OCI-LY7 (cell line): ENCODE measurements at regions of chr3 and their contacts with region 1.

Region 1: GRCh38 chr3:37779289-37780152 is 82.2 kb upstream of the CTDSPL start:
- DNase-seq: peak; percentile 72
- H3K4me3 ChIP-seq: no peak overlapping the region
- H3K27ac ChIP-seq: no peak overlapping the region
- H3K4me1 ChIP-seq: no peaks in the 10 kb centered on the region
- CTCF ChIP-seq: peak; percentile 90

Region 2: GRCh38 chr3:37319784-37320183 is 459.7 kb before region 1 on chr3:
- CTCF ChIA-PET with region 1: no interaction called
- POLR2A ChIA-PET with region 1: no interaction called
- intact Hi-C with region 1: loop called (anchors 5 kb)
- DNase-seq: no peak
- H3K4me3 ChIP-seq: no peak overlapping the region
- H3K27ac ChIP-seq: no peak overlapping the region
- H3K4me1 ChIP-seq: no peaks in the 10 kb centered on the region
- CTCF ChIP-seq: no peak